Gastrocnemius medialis (tissue), 4 donors: ENCODE measurements at regions of chr1 and their contacts with region 1.

Region 1: DNA sequence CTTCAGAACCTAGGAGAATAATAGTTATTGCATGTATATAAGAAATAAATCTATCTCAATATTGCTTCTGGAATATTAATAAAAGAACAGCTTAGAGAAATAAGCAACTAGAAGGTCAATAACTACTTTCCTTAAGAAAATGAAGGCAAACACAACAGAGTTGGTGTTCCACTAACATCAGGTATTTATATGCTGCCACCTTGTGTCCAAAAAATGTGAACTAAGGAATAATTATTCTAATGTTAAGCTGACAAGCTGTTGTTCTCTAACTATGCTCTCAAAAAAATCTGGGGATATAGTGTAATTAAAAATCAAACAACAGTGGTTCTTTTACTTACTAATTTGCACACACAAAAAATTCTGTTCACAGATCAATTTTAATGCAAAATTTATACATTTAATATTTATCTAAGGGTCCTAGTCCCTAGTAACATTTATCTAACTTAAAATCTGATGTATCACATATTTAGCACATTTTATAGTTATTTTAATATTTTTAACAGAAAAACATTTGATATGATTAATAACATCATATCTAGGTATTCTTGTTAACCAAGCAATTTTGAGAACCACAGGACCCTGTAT is 39.6 kb downstream of the UCHL5 start:
- DNase-seq: no peak
- ATAC-seq: no peak
- H3K4me3 ChIP-seq: no peak overlapping the region
- H3K27ac ChIP-seq: no peak overlapping the region
- H3K4me1 ChIP-seq: peaks cover 0 to 2% of the 10 kb centered on the region in 2 donors
- H3K27me3 ChIP-seq: no peaks in the 10 kb centered on the region
- CTCF ChIP-seq: peak in 3 of 5 experiments; percentile 21 to 52 (median 35)
- POLR2A ChIP-seq: no peak

Region 2: DNA sequence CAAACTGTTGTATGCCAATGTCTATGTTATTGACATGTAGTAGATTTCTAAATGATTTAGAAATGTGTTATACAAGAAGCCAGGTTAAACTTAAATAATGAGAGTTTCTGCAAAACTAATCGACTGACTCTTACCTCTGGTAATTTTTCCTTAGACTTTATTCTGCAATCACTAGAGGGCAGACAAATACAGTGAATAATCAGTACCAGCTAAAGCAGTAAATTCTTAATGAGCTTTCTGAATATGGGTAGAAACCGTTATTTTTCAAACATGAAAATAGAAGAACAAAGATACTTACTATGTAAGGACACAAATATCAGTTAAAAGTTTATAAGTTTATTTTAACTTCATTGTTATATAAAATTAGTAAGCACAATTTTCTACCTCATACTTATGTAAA is 541.9 kb before region 1 on chr1:
- in situ Hi-C with region 1: loop called (anchors 10 to 25 kb)
- intact Hi-C with region 1: loop called (anchors 2 kb)
- DNase-seq: no peak
- ATAC-seq: peak in 1 of 2 donors; percentile 45
- H3K4me3 ChIP-seq: no peak overlapping the region
- H3K27ac ChIP-seq: no peak overlapping the region
- H3K4me1 ChIP-seq: no peaks in the 10 kb centered on the region
- H3K27me3 ChIP-seq: no peaks in the 10 kb centered on the region
- CTCF ChIP-seq: peak in 2 of 5 experiments; percentile 17 to 26
- POLR2A ChIP-seq: no peak

Region 3: DNA sequence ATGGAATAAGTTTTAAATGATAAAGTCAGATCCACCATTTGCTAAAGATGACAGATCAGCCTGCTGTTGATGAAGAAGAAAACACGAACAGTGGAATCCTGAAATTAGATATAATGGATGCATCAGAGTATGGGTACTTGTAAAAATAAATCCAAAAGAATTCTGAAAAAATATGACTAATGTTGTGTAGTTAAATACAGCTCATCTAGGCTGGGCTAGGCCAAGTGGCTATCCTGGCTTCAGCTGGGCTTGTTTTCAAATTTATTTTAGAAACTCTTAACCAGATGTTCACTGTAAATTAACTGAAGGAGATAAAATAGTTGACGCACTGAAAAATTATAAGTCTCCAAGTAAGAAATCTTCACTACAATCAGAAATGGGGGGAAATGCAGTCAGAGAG is 218.1 kb before region 1 on chr1:
- in situ Hi-C with region 1: loop called in 2 of 4 experiments (anchors 5 to 25 kb)
- intact Hi-C with region 1: loop called (anchors 1 kb)
- DNase-seq: no peak
- ATAC-seq: no peak
- H3K4me3 ChIP-seq: no peak overlapping the region
- H3K27ac ChIP-seq: no peak overlapping the region
- H3K4me1 ChIP-seq: no peaks in the 10 kb centered on the region
- H3K27me3 ChIP-seq: no peaks in the 10 kb centered on the region
- CTCF ChIP-seq: no peak
- POLR2A ChIP-seq: no peak

Region 4: DNA sequence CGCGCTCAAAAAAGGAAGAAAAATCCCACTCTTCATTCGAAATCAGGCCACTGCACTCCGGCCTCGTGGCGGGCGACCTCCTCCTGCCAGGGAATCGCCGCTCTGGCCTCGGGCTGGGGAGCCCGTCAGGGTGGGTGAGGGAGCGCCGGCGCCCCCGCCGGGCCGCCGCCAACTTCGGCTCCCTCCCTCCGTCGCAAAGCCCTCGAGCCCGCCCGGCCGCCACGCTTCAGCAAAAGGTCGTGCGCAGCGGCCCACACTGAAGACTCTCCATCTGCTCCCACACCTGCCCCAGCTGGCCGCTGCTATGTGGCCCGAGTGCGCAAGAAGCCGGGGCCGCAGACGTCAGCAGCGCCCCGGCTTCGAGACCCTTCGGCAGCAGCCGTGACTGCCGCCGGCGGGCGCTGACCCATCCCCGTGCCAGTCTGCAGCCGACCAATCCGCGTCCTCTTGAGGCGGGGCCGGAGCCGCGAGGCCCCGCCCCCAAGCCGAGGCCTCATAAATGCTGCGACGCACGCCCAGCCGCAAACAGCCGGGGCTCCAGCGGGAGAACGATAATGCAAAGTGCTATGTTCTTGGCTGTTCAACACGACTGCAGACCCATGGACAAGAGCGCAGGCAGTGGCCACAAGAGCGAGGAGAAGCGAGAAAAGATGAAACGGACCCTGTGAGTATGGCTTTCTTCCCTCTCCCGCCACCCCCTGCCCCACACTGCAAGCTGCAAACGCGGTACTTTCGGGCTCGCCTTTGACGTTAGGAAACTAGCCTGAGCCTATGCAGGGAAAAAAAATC is 210.8 kb before region 1 on chr1 and contains the start of gene RGS2:
- in situ Hi-C with region 1: loop called in 3 of 4 experiments (anchors 5 to 25 kb)
- intact Hi-C with region 1: loop called (anchors 1 kb)
- DNase-seq: peak; percentile 80 to 86
- ATAC-seq: peak; percentile 93
- H3K4me3 ChIP-seq: peak within 1 kb of the TSS; percentile 73 to 87 (median 80)
- H3K27ac ChIP-seq: peak within 1 kb of the TSS; percentile 73 to 88 (median 82)
- H3K4me1 ChIP-seq: peaks cover 12 to 19% of the 10 kb centered on the region in 2 donors
- H3K27me3 ChIP-seq: no peaks in the 10 kb centered on the region
- CTCF ChIP-seq: peak in 1 of 5 experiments; percentile 12
- POLR2A ChIP-seq: peak; percentile 88 to 98
- total RNA-seq, gene RGS2: 1.2 to 14.6 (median 5.8) TPM

Region 5: GRCh38 chr1:193042766-193043691 is 23.5 kb after region 1 on chr1:
- in situ Hi-C with region 1: no loop called
- intact Hi-C with region 1: no loop called
- DNase-seq: no peak
- ATAC-seq: no peak
- H3K4me3 ChIP-seq: no peak overlapping the region
- H3K27ac ChIP-seq: peak overlapping the region in 2 of 4 donors; percentile 3 to 35
- H3K4me1 ChIP-seq: peaks cover 0 to 4% of the 10 kb centered on the region in 2 donors
- H3K27me3 ChIP-seq: no peaks in the 10 kb centered on the region
- CTCF ChIP-seq: no peak
- POLR2A ChIP-seq: no peak